OCI-LY7 (cell line): ENCODE measurements at regions of chr1 and their contacts with region 1.

Region 1: DNA sequence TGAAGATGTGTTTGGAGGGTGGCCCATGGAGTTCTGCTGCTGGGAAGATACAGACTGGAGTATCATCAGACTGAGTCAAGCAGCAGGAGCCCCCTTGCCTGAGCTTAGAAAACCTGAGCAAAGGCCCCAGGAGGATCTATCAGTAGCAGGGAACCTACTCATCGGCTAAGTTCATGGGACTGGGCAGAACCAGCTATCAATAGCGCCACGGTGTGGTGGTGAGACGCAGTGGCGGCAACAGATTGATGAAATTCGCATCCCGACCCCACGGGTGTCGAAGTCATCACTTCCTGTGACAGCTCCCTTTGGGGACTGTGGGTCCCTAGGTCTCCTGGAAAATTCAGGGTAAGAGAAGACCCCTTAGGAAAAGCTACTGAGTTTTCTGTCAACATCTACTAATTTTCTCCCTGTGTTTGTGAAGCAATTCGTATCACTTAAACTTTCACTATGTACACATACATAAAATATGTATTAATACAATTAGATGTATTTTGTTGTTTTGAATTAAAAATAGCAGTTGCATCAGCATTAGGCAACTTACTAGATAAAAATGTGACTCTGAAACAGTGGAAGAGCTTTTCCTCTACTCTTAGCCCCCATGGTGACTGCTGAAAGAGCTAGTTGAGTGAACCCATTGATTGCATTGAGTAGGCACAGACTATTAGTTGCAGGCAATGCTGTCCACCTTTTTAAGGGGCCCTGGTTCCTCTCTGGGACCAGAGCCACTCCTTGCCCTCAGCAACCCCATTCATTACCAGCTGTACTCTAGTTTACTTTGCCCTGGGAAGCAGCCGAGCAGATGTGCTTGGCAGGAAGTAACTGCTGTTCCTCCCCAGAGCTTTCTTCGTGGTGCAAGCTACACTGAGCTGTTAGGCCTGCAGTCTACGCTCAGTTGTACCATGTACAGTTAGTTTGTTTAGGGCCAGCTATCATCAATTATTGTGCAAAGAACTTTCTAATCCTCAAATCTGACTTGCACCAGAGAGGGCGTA is 7.3 kb upstream of the CACNA1S start:
- DNase-seq: peak; percentile 67
- H3K4me3 ChIP-seq: no peak overlapping the region
- H3K27ac ChIP-seq: no peak overlapping the region
- H3K4me1 ChIP-seq: peaks cover 11% of the 10 kb centered on the region
- CTCF ChIP-seq: peak; percentile 92

Region 2: GRCh38 chr1:201104141-201104540 is 15.4 kb before region 1 on chr1:
- CTCF ChIA-PET with region 1: interaction called, 11 read pairs
- POLR2A ChIA-PET with region 1: interaction called, 3 read pairs
- intact Hi-C with region 1: no loop called
- DNase-seq: no peak
- H3K4me3 ChIP-seq: no peak overlapping the region
- H3K27ac ChIP-seq: no peak overlapping the region
- H3K4me1 ChIP-seq: no peaks in the 10 kb centered on the region
- CTCF ChIP-seq: no peak

Region 3: GRCh38 chr1:201137579-201138310 is 18.2 kb after region 1 on chr1:
- CTCF ChIA-PET with region 1: no interaction called
- POLR2A ChIA-PET with region 1: no interaction called
- intact Hi-C with region 1: no loop called
- DNase-seq: no peak
- H3K4me3 ChIP-seq: no peak overlapping the region
- H3K27ac ChIP-seq: no peak overlapping the region
- H3K4me1 ChIP-seq: no peaks in the 10 kb centered on the region
- CTCF ChIP-seq: no peak